ENCODE measurements at regions of chr11 and their contacts with region 1.

Region 1: GRCh38 chr11:90204832-90205646 is 17.8 kb downstream of the CHORDC1 start:
- DNase-seq: peak; percentile 33 to 55 (median 41)
- H3K4me3 ChIP-seq: no peak overlapping the region
- H3K4me3 Mint-ChIP-seq: no peak overlapping the region
- H3K27ac ChIP-seq: no peak overlapping the region
- H3K27ac Mint-ChIP-seq: peak overlapping the region; percentile 41 to 87 (median 67)
- H3K4me1 ChIP-seq: peaks cover 11% of the 10 kb centered on the region
- H3K4me1 Mint-ChIP-seq: peaks cover 14 to 20% (median 18%) of the 10 kb centered on the region in 4 donors
- H3K27me3 ChIP-seq: no peaks in the 10 kb centered on the region
- H3K27me3 Mint-ChIP-seq: no peaks in the 10 kb centered on the region

Region 2: DNA sequence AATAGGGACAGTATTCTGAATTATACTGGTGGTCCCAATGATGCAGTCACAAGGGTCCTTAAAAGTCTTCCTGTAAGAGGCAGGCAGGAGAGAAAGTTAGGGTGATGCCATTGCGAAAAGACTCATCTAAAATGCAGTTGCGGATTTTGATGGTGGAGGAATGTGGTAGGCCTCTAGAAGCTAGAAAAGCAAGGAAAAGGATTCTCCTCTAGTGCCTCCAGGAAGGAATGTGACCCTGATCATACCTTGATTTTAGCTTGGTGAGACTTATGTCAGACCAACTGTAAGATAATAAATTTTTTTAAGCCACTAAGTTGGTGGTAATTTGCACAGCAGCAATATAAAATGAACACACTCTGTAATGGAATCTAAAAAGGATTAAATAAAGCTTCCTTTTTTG is 16.0 kb before region 1 on chr11:
- CTCF ChIA-PET with region 1: interaction called, 14 read pairs
- POLR2A ChIA-PET with region 1: no interaction called
- intact Hi-C with region 1: no loop called
- DNase-seq: no peak
- H3K4me3 ChIP-seq: no peak overlapping the region
- H3K4me3 Mint-ChIP-seq: no peak overlapping the region
- H3K27ac ChIP-seq: no peak overlapping the region
- H3K27ac Mint-ChIP-seq: no peak overlapping the region
- H3K4me1 ChIP-seq: no peaks in the 10 kb centered on the region
- H3K4me1 Mint-ChIP-seq: peaks cover 0 to 2% (median 0%) of the 10 kb centered on the region in 4 donors
- H3K27me3 ChIP-seq: no peaks in the 10 kb centered on the region
- H3K27me3 Mint-ChIP-seq: no peaks in the 10 kb centered on the region

Region 3: DNA sequence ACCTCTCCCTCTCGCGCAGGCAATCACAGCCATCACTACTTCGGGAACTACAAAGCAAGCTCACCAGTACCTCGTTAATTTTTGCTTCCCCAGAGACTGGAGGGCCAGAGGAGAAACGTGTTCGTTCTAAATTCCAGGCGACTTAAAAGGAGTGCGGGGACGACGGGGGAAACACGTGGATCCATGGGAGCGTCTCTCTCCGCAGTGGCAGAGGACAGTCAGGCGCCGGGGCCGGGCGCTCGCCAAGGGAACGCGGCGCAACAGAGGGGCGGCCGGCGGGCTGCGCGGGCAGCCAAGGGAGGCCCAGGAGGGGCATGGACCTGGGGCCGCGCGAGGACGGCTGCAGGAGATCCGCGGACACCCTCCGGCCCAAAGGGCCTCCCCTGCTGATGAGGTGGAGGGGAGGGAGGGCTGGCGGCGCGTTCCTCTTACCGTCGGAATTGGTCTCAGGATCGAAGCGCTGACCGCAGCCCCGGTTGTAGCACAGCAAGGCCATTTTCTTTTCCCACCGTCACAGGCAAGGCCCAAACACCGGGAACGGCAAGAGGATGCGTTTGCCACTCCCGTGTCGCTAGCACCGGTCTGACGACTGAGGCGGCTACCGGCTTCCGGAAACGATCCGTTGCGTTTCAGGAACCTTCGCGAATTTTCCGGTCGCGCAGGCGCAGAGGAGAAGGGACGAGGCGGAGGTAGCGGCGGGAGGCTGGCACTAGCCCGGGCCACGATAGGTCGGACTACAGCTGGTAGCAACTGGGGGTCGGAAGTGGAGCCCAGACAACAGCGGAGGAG is 17.6 kb after region 1 on chr11 and contains the start of gene CHORDC1:
- CTCF ChIA-PET with region 1: interaction called, 23 read pairs
- POLR2A ChIA-PET with region 1: interaction called, 4 read pairs
- intact Hi-C with region 1: loop called (anchors 1 kb)
- DNase-seq: peak; percentile 88 to 92 (median 89)
- H3K4me3 ChIP-seq: peak within 1 kb of the TSS; percentile 95 to 99
- H3K4me3 Mint-ChIP-seq: peak within 1 kb of the TSS; percentile 96 to 99 (median 98)
- H3K27ac ChIP-seq: peak within 1 kb of the TSS; percentile 88
- H3K27ac Mint-ChIP-seq: peak within 1 kb of the TSS; percentile 88 to 99 (median 97)
- H3K4me1 ChIP-seq: peaks cover 51% of the 10 kb centered on the region
- H3K4me1 Mint-ChIP-seq: peaks cover 44 to 62% (median 52%) of the 10 kb centered on the region in 4 donors
- H3K27me3 ChIP-seq: no peaks in the 10 kb centered on the region
- H3K27me3 Mint-ChIP-seq: no peaks in the 10 kb centered on the region
- total RNA-seq, gene CHORDC1: 70.2 to 78.4 TPM

Region 4: GRCh38 chr11:90229791-90230190 is 24.8 kb after region 1 on chr11:
- CTCF ChIA-PET with region 1: interaction called, 14 read pairs
- POLR2A ChIA-PET with region 1: no interaction called
- intact Hi-C with region 1: no loop called
- DNase-seq: no peak
- H3K4me3 ChIP-seq: no peak overlapping the region
- H3K4me3 Mint-ChIP-seq: no peak overlapping the region
- H3K27ac ChIP-seq: no peak overlapping the region
- H3K27ac Mint-ChIP-seq: no peak overlapping the region
- H3K4me1 ChIP-seq: no peaks in the 10 kb centered on the region
- H3K4me1 Mint-ChIP-seq: peaks cover 0 to 3% (median 0%) of the 10 kb centered on the region in 4 donors
- H3K27me3 ChIP-seq: no peaks in the 10 kb centered on the region
- H3K27me3 Mint-ChIP-seq: peaks cover 0 to 2% of the 10 kb centered on the region in 2 donors